Aorta (tissue), 5 donors: ENCODE measurements at regions of chr10 and their contacts with region 1.

Region 1: GRCh38 chr10:47165711-47166524 is 134.1 kb upstream of the GDF10 start:
- DNase-seq: peak; percentile 87 to 91
- ATAC-seq: peak; percentile 86
- H3K4me3 ChIP-seq: peak overlapping the region in 1 of 2 donors; percentile 36
- H3K27ac ChIP-seq: peak overlapping the region; percentile 32 to 78
- H3K4me1 ChIP-seq: peaks cover 0 to 4% of the 10 kb centered on the region in 2 donors
- H3K27me3 ChIP-seq: no peaks in the 10 kb centered on the region

Region 2: DNA sequence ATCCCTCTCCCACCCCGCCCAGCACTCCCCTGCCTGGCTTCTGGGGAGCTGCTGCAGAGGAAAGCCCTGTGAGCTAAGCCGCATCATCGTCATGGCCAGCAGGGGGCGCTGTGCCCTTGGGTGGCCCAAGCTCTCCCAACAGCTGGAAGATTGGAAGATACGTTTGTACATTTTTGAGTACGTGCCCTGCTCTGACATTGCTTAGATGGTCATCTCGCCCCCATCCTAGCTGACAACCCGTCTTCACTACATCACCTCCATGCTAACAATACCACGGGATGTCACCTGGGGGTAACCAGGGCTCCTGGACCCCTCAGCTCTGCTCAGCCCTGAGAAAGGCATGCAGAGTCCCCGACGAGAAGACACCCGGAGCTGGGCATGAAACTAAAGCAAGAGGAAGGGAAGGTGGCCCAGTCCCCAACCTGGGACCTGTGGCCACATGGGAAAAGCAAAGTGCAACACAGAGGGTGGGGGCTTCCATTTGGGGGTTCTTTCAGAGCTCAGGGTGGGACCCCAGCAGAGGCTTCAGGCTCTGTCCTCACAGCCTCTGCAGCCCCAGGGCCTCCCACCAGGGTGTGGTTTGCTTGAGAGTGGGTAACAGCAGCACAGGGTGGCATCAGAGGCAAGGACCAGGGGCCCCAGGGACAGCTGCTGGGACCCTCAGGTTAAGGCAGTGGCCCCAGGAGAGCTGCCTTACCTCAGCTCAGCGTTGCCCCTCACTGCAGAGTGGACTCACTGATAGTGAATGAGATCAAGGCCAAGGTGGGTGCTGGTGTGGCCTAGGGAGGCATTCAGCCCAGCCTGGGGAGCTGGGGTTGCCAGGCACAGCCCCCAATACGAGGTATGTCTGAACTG is 118.0 kb before region 1 on chr10:
- intact Hi-C with region 1: loop called in 1 of 2 experiments (anchors 2 kb)
- DNase-seq: peak; percentile 87 to 95
- ATAC-seq: peak; percentile 75
- H3K4me3 ChIP-seq: no peak overlapping the region
- H3K27ac ChIP-seq: no peak overlapping the region
- H3K4me1 ChIP-seq: peaks cover 0 to 2% of the 10 kb centered on the region in 2 donors
- H3K27me3 ChIP-seq: no peaks in the 10 kb centered on the region

Region 3: GRCh38 chr10:47062466-47063200 is 103.3 kb before region 1 on chr10:
- intact Hi-C with region 1: loop called (anchors 2 to 5 kb)
- DNase-seq: no peak
- ATAC-seq: peak; percentile 30
- H3K4me3 ChIP-seq: no peak overlapping the region
- H3K27ac ChIP-seq: no peak overlapping the region
- H3K4me1 ChIP-seq: peaks cover 0 to 3% of the 10 kb centered on the region in 2 donors
- H3K27me3 ChIP-seq: no peaks in the 10 kb centered on the region

Region 4: DNA sequence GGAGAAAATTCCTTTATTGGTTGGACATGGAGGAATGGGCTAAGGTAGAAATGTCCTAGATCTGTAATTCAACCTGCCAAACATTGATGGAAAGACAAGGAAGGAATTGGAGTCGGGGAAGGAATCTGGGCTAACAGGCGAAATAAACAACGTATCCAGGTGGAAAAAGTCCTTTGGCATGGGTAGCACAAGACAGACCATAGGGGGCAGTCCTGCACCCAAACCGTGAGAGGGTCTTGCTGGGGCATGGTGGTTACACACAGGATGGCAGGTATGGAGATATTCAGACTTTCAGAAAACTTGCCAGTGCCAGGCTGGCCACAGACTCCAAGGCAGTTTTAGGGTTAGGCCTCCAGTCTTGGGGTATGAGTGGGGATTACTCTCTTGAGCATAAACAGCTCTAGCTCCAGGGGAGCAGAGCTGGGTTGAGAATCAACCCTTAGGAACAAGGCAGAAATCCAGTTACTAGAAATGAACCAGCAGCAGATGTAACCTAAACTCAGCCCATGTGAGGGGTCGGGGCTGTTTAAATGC is 54.5 kb before region 1 on chr10:
- intact Hi-C with region 1: loop called in 1 of 2 experiments (anchors 5 kb)
- DNase-seq: no peak
- ATAC-seq: no peak
- H3K4me3 ChIP-seq: no peak overlapping the region
- H3K27ac ChIP-seq: no peak overlapping the region
- H3K4me1 ChIP-seq: peaks cover 3 to 4% of the 10 kb centered on the region in 2 donors
- H3K27me3 ChIP-seq: no peaks in the 10 kb centered on the region

Region 5: DNA sequence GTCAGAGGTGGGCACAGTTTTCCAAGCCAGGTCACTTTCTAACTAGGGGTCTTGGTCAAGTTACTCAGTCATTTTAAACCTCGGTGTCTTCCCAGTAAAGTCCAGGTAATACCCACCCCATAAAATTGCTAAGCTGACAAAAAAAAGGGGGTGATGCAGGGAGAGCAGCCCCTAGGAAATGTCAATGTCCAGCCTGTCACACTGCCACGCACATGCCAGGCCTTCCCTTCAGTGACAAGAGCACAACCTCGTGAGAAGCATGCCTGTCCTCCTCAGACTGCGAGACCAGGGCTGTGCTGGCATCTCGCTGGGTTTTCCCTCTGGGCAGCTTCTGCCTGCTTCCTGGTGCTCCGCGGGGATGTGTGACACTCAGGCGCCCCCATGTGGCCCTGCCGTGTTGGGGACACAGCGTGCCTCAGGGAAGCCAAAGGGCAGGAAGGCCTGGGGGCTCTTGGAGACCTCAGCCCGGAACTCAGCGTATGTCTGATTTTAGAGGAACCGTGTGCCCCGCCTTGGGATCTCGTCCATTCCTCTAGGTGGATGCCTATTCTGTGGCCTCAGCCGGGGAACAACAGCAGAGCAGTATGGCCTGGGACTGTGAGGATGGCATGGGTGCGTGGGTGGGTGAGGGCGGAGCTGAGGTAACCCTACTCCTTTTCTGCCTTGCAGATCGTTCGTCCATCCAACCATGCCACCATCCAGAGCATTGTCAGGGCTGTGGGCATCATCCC is 146.2 kb after region 1 on chr10:
- intact Hi-C with region 1: loop called in 1 of 2 experiments (anchors 10 kb)
- DNase-seq: peak; percentile 90 to 95
- ATAC-seq: peak; percentile 92
- H3K4me3 ChIP-seq: no peak overlapping the region
- H3K27ac ChIP-seq: no peak overlapping the region
- H3K4me1 ChIP-seq: no peaks in the 10 kb centered on the region
- H3K27me3 ChIP-seq: no peaks in the 10 kb centered on the region